Heart right ventricle (tissue), 16 donors: ENCODE measurements at regions of chr18 and their contacts with region 1.

Region 1: GRCh38 chr18:31274915-31275314 is 43.0 kb upstream of the DSG1 start:
- DNase-seq: peak; percentile 33 to 65
- ATAC-seq: peak in 6 of 8 donors; percentile 81 to 93 (median 90)
- H3K4me3 ChIP-seq: no peak overlapping the region
- H3K27ac ChIP-seq: peak overlapping the region in 8 of 10 donors; percentile 11 to 58 (median 36)
- H3K4me1 ChIP-seq: peaks cover 0 to 27% (median 19%) of the 10 kb centered on the region in 9 donors
- H3K27me3 ChIP-seq: no peaks in the 10 kb centered on the region
- CTCF ChIP-seq: no peak

Region 2: GRCh38 chr18:31325051-31325450 is 50.1 kb after region 1 on chr18:
- intact Hi-C with region 1: loop called in 1 of 10 experiments (anchors 10 kb)
- DNase-seq: peak in 1 of 2 donors; percentile 22
- ATAC-seq: peak in 4 of 8 donors; percentile 17 to 73 (median 30)
- H3K4me3 ChIP-seq: no peak overlapping the region
- H3K27ac ChIP-seq: no peak overlapping the region
- H3K4me1 ChIP-seq: peaks cover 0 to 11% (median 0%) of the 10 kb centered on the region in 9 donors
- H3K27me3 ChIP-seq: no peaks in the 10 kb centered on the region
- CTCF ChIP-seq: no peak

Region 3: DNA sequence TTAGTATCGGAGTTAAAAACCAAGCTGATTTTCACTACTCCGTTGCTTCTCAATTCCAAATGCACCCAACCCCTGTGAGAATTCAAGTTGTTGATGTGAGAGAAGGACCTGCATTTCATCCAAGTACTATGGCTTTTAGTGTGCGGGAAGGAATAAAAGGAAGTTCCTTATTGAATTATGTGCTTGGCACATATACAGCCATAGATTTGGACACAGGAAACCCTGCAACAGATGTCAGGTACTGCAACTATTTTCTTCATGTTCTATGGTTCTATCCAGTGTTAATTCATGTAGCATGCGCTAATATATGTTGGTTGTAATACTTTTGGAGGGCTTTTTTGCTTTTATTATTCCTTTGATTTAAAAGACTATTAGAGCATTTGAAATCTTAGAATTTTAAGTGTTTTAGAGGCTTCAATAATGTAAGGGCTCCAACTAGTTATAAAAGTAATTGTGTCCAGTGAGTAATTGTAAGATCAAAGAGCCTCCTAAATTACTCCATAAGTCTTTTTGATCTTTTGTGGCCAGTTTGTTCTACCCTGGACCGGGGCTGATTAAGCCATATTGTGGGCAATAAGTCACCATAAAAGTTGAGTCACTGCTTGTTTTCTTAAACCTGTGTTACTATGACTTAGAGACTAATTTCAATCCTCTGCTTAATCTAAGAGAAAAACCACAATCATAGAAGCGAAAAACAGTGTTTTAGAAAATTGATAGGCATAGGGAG is 124.6 kb after region 1 on chr18:
- intact Hi-C with region 1: loop called in 2 of 10 experiments (anchors 10 kb)
- DNase-seq: no peak
- ATAC-seq: no peak
- H3K4me3 ChIP-seq: no peak overlapping the region
- H3K27ac ChIP-seq: no peak overlapping the region
- H3K4me1 ChIP-seq: peaks cover 0 to 23% (median 14%) of the 10 kb centered on the region in 9 donors
- H3K27me3 ChIP-seq: no peaks in the 10 kb centered on the region
- CTCF ChIP-seq: no peak

Region 4: DNA sequence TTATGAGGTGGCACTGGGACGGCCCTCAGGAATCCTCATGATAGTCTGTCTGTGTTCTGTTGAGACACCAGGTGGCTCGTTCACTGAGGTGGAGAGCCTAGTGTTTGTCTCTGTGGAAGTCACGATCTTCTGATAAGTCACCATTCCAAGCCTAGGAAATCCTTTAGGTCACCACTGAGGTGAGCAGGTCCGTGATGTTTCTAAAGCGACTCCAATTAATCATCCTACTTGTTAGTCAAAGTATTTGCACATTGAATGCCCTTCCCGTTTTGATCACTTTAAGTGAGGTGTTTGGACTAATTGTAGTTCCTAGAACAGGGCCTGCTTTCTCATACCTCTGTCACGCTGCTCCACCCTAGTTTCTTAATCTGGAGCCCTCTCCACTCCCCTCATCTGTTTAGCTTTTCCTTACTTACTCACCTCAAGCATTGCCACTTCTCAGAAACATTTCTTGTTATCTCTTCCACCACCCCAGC is 144.6 kb after region 1 on chr18:
- intact Hi-C with region 1: no loop called
- DNase-seq: no peak
- ATAC-seq: no peak
- H3K4me3 ChIP-seq: no peak overlapping the region
- H3K27ac ChIP-seq: no peak overlapping the region
- H3K4me1 ChIP-seq: no peaks in the 10 kb centered on the region
- H3K27me3 ChIP-seq: no peaks in the 10 kb centered on the region
- CTCF ChIP-seq: no peak

Region 5: DNA sequence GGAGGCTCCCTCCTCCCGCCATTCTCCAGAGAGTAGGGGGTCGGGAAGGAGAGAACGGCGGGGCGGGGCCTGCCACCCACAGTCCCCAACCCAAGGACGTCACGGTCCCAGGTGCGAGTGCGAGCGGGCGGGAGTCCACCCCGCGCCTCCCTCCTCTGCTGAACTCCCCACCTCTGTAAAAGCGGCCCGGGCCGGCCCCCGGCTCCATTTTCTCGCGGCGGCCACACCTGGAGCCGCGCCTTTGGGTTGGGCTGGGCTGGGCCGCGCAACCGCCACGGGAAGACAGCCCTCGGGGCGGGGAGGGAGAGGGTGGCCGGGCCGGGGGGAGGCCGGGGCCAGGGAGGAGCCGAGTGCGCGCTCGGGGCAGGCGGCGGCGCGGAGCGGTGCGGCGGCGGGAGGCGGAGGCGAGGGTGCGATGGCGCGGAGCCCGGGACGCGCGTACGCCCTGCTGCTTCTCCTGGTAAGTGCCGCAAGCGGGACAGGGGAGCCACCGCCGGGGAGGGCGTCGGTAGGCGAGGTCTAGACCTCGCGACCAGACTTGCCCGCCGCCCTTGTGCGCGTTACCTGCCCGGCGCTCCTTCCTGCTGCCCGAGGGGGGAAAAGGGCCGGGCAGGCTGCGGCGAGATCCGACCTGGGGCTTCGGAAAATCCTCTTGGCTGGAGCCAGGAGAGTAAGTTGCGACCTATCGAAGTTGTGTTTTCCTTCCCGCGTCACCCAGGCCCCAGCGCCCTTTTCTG is 223.1 kb after region 1 on chr18 and contains the start of gene DSG2:
- intact Hi-C with region 1: loop called in 4 of 10 experiments (anchors 5 to 10 kb)
- DNase-seq: peak; percentile 51 to 74
- ATAC-seq: peak; percentile 89 to 99 (median 96)
- H3K4me3 ChIP-seq: peak within 1 kb of the TSS; percentile 32 to 78 (median 71)
- H3K27ac ChIP-seq: peak within 1 kb of the TSS; percentile 35 to 86 (median 74)
- H3K4me1 ChIP-seq: peaks cover 0 to 22% (median 5%) of the 10 kb centered on the region in 9 donors
- H3K27me3 ChIP-seq: peaks cover 0 to 44% (median 4%) of the 10 kb centered on the region in 7 donors
- CTCF ChIP-seq: no peak
- total RNA-seq, gene DSG2: 36.0 to 53.8 (median 41.4) TPM